ENCODE measurements at regions of chr10 and their contacts with region 1.

Region 1: DNA sequence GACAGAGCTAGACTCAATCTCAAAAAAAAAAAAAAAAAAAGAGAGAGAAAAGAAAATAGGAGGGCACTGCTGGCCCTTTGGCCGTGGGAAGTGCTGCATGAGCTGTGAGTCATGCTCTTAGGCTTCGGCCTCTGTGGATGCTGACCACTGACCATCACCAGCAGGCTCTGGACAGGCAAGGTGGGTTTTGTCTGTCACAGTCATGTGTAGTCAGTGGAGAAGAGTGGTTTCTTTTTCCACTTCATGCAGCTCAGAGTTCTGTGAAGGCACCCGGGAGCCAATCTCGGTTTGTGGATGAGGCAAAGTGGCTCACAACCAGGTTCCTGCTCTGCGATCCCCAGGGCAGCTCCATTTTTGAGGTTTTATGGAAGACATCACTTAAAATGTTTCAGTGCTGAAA is 58.1 kb downstream of the PRTFDC1 start:
- DNase-seq: no peak
- H3K4me3 ChIP-seq: peak overlapping the region in 1 of 2 donors; percentile 40
- H3K4me3 Mint-ChIP-seq: peak overlapping the region; percentile 72 to 94 (median 86)
- H3K27ac ChIP-seq: peak overlapping the region; percentile 35
- H3K27ac Mint-ChIP-seq: peak overlapping the region; percentile 95 to 98 (median 96)
- H3K4me1 ChIP-seq: peaks cover 66% of the 10 kb centered on the region
- H3K4me1 Mint-ChIP-seq: peaks cover 33 to 88% (median 56%) of the 10 kb centered on the region in 4 donors
- H3K27me3 ChIP-seq: no peaks in the 10 kb centered on the region
- H3K27me3 Mint-ChIP-seq: no peaks in the 10 kb centered on the region

Region 2: DNA sequence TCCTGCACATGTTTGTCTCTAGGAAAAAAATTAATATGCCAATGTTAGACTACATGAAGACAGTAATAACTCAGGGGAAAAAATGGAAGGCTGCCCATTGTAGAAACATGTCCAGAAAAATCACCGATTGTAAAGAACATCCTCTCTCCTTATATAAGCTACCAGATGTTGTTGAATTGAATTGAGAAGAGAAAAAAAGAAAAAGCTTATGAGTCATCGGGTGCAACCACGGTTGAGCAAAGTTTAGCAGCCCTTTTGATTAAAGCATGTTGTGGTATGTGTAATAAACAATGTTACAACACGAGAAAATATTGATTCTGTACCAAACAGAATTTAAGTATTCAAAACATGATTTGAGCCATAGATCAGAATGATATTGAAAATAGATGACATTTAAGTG is 68.3 kb before region 1 on chr10:
- CTCF ChIA-PET with region 1: no interaction called
- POLR2A ChIA-PET with region 1: no interaction called
- intact Hi-C with region 1: loop called (anchors 5 kb)
- DNase-seq: peak in 3 of 5 donors; percentile 3 to 17 (median 5)
- H3K4me3 ChIP-seq: no peak overlapping the region
- H3K4me3 Mint-ChIP-seq: peak overlapping the region; percentile 27 to 77 (median 66)
- H3K27ac ChIP-seq: no peak overlapping the region
- H3K27ac Mint-ChIP-seq: peak overlapping the region in 6 of 7 donors; percentile 13 to 70 (median 34)
- H3K4me1 ChIP-seq: peaks cover 14% of the 10 kb centered on the region
- H3K4me1 Mint-ChIP-seq: peaks cover 18 to 27% (median 21%) of the 10 kb centered on the region in 4 donors
- H3K27me3 ChIP-seq: no peaks in the 10 kb centered on the region
- H3K27me3 Mint-ChIP-seq: no peaks in the 10 kb centered on the region

Region 3: GRCh38 chr10:24882047-24882698 is 12.1 kb before region 1 on chr10:
- CTCF ChIA-PET with region 1: interaction called, 7 read pairs
- POLR2A ChIA-PET with region 1: interaction called, 25 read pairs
- intact Hi-C with region 1: loop called (anchors 1 kb)
- DNase-seq: peak; percentile 47 to 60 (median 52)
- H3K4me3 ChIP-seq: peak overlapping the region in 1 of 2 donors; percentile 39
- H3K4me3 Mint-ChIP-seq: peak overlapping the region; percentile 74 to 89 (median 86)
- H3K27ac ChIP-seq: peak overlapping the region; percentile 25
- H3K27ac Mint-ChIP-seq: peak overlapping the region; percentile 82 to 97 (median 91)
- H3K4me1 ChIP-seq: peaks cover 65% of the 10 kb centered on the region
- H3K4me1 Mint-ChIP-seq: peaks cover 28 to 67% (median 41%) of the 10 kb centered on the region in 4 donors
- H3K27me3 ChIP-seq: no peaks in the 10 kb centered on the region
- H3K27me3 Mint-ChIP-seq: no peaks in the 10 kb centered on the region

Region 4: DNA sequence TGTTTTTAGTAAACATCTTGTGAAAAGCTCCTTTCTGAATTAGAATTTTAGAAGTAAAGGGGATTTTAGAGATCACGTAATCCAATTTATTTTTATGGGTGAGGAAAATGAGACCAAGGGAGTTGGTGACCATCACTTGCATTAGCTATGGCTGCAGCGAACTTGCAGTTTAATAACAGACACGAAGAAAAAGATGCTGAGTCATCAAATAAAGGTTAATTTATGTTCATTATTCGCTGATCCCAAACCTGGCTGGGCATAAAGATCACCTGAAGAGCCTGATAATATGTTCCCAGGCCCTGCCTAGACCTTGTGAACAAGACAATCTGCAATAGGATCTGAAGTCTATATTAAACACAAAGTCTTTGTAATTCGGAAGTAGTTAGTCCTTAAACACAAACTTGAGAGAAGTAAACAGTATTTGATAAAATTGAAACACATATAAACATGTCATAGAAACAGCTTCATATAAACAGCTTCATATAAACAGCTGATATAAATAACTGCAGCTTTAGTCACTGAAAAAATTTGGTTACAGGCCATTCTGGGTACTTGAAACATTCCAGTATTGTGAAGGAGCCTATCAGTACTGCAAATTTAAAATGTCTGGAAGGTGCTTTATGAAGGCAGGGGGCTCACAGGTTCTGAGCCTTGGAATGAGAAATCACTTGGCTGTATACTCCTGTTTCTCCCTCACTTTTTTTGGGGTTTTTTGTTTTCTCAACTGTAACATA is 297.0 kb after region 1 on chr10:
- CTCF ChIA-PET with region 1: no interaction called
- POLR2A ChIA-PET with region 1: no interaction called
- intact Hi-C with region 1: no loop called
- DNase-seq: no peak
- H3K4me3 ChIP-seq: no peak overlapping the region
- H3K4me3 Mint-ChIP-seq: no peak overlapping the region
- H3K27ac ChIP-seq: no peak overlapping the region
- H3K27ac Mint-ChIP-seq: peak overlapping the region in 1 of 7 donors; percentile 28
- H3K4me1 ChIP-seq: no peaks in the 10 kb centered on the region
- H3K4me1 Mint-ChIP-seq: no peaks in the 10 kb centered on the region
- H3K27me3 ChIP-seq: no peaks in the 10 kb centered on the region
- H3K27me3 Mint-ChIP-seq: peaks cover 0 to 4% of the 10 kb centered on the region in 2 donors

Measured in CD4-positive, alpha-beta memory T cell (primary cell).